Activated B cell treated with CpG ODN at 0.5 μM for 24 hours (primary cell): ENCODE measurements at regions of chr10 and their contacts with region 1.

Region 1: GRCh38 chr10:109883859-109884771 is 39.2 kb downstream of the XPNPEP1 start:
- DNase-seq: peak; percentile 40
- ATAC-seq: peak; percentile 88
- H3K4me3 Mint-ChIP-seq: no peak overlapping the region
- H3K27ac Mint-ChIP-seq: no peak overlapping the region
- H3K4me1 Mint-ChIP-seq: peaks cover 12% of the 10 kb centered on the region
- H3K27me3 Mint-ChIP-seq: no peaks in the 10 kb centered on the region
- CTCF ChIP-seq: peak; percentile 95

Region 2: DNA sequence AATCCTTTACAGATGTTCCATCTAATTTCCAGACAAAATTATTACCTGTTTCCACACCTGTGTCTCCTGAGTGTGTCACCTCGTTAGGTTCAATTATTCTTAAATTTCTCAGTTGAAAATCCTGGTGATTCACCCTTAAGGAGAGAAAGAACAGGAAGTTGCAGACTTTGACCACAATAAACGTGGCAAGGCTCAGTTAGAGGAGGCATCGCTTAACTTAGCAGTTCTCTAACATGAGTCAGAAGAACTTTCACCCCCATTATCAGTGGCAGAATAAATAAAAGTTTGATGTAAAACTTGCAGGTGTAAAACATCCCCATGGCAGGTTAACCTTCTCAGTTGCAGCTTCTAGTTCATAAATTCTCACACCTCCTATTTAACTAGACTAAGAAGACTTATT is 30.9 kb after region 1 on chr10:
- CTCF ChIA-PET with region 1: interaction called, 21 read pairs
- POLR2A ChIA-PET with region 1: no interaction called
- intact Hi-C with region 1: no loop called
- DNase-seq: no peak
- ATAC-seq: peak; percentile 53
- H3K4me3 Mint-ChIP-seq: no peak overlapping the region
- H3K27ac Mint-ChIP-seq: peak overlapping the region; percentile 54
- H3K4me1 Mint-ChIP-seq: peaks cover 67% of the 10 kb centered on the region
- H3K27me3 Mint-ChIP-seq: no peaks in the 10 kb centered on the region
- CTCF ChIP-seq: no peak

Region 3: GRCh38 chr10:109956454-109957091 is 72.5 kb after region 1 on chr10:
- CTCF ChIA-PET with region 1: interaction called, 13 read pairs
- POLR2A ChIA-PET with region 1: no interaction called
- intact Hi-C with region 1: loop called (anchors 1 kb)
- DNase-seq: no peak
- ATAC-seq: peak; percentile 79
- H3K4me3 Mint-ChIP-seq: peak overlapping the region; percentile 22
- H3K27ac Mint-ChIP-seq: peak overlapping the region; percentile 13
- H3K4me1 Mint-ChIP-seq: peaks cover 15% of the 10 kb centered on the region
- H3K27me3 Mint-ChIP-seq: no peaks in the 10 kb centered on the region
- CTCF ChIP-seq: peak; percentile 50

Region 4: DNA sequence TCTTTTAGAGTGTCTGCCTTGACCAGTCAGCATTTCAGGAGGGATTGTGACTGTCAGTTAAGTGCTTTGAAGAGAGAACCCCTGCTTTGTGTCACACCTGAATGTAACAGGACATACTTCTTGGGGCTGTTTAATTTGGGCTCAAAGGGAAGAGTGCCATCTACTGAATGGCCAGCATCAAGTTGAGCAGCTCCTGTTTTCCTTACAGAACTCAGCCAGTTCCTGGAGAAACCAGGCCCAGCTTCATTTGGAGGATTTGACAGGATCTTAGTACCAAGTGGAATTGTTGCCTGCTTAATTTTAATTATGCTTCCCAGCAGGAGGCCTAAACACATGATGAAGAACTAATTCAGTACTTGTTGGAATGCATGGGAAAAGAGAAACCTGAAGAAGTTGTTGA is 131.9 kb after region 1 on chr10:
- CTCF ChIA-PET with region 1: interaction called, 14 read pairs
- POLR2A ChIA-PET with region 1: no interaction called
- intact Hi-C with region 1: no loop called
- DNase-seq: no peak
- ATAC-seq: peak; percentile 37
- H3K4me3 Mint-ChIP-seq: no peak overlapping the region
- H3K27ac Mint-ChIP-seq: no peak overlapping the region
- H3K4me1 Mint-ChIP-seq: peaks cover 76% of the 10 kb centered on the region
- H3K27me3 Mint-ChIP-seq: no peaks in the 10 kb centered on the region
- CTCF ChIP-seq: no peak

Region 5: GRCh38 chr10:110118891-110119621 is 234.9 kb after region 1 on chr10:
- CTCF ChIA-PET with region 1: interaction called, 6 read pairs
- POLR2A ChIA-PET with region 1: no interaction called
- intact Hi-C with region 1: loop called (anchors 5 kb)
- DNase-seq: no peak
- ATAC-seq: no peak
- H3K4me3 Mint-ChIP-seq: no peak overlapping the region
- H3K27ac Mint-ChIP-seq: no peak overlapping the region
- H3K4me1 Mint-ChIP-seq: no peaks in the 10 kb centered on the region
- H3K27me3 Mint-ChIP-seq: no peaks in the 10 kb centered on the region
- CTCF ChIP-seq: no peak

Region 6: DNA sequence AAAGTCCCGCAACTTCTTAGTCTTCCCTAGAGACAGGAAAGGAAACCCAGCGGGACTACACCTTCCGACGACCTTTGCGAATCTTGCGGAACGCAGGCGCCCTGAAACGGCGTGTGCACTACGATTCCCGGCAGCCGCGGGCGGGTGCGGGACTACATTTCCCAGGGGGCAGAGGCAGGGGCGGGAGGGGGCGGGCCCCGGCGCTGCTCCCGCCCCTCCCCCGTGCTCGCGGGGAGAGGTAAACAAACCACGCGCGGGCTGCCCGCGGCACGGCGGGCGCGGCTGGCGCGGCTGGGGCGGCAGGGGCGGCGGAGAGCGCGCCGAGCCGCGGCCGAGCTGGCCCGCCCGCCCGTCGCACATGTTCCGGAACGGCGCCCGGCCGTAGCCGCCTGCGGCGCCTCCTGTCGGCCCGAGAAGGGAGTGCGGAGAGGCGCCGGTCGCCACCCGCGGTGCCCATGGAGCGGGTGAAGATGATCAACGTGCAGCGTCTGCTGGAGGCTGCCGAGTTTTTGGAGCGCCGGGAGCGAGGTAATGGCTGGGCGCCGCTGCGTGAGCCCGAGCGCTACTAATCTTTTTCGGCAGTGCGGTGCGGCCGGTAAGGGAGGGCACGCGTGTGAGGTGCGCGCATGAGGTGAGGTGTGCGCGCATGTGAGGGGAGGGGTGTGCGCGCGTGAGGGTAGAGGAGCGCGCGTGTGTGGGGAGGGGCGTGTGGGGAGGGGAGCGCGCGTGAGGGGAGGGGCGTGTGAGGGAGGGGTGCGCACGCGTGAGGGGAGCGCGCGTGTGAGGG is 341.8 kb after region 1 on chr10:
- CTCF ChIA-PET with region 1: interaction called, 5 read pairs
- POLR2A ChIA-PET with region 1: no interaction called
- intact Hi-C with region 1: loop called (anchors 2 kb)
- DNase-seq: peak; percentile 83
- ATAC-seq: peak; percentile 51
- H3K4me3 Mint-ChIP-seq: peak overlapping the region; percentile 97
- H3K27ac Mint-ChIP-seq: peak overlapping the region; percentile 96
- H3K4me1 Mint-ChIP-seq: peaks cover 28% of the 10 kb centered on the region
- H3K27me3 Mint-ChIP-seq: no peaks in the 10 kb centered on the region
- CTCF ChIP-seq: no peak